Natural killer cell (primary cell): ENCODE measurements at regions of chr20 and their contacts with region 1.

Region 1: GRCh38 chr20:15288106-15288505 is 950.7 kb upstream of the FLRT3 start:
- DNase-seq: no peak
- ATAC-seq: no peak
- H3K4me3 ChIP-seq: no peak overlapping the region
- H3K4me3 Mint-ChIP-seq: no peak overlapping the region
- H3K27ac ChIP-seq: no peak overlapping the region
- H3K27ac Mint-ChIP-seq: no peak overlapping the region
- H3K4me1 ChIP-seq: no peaks in the 10 kb centered on the region
- H3K4me1 Mint-ChIP-seq: no peaks in the 10 kb centered on the region
- H3K27me3 ChIP-seq: no peaks in the 10 kb centered on the region
- H3K27me3 Mint-ChIP-seq: no peaks in the 10 kb centered on the region
- CTCF ChIP-seq: no peak

Region 2: GRCh38 chr20:15343043-15343523 is 55.0 kb after region 1 on chr20:
- intact Hi-C with region 1: loop called (anchors 10 kb)
- DNase-seq: no peak
- ATAC-seq: no peak
- H3K4me3 ChIP-seq: no peak overlapping the region
- H3K4me3 Mint-ChIP-seq: no peak overlapping the region
- H3K27ac ChIP-seq: no peak overlapping the region
- H3K27ac Mint-ChIP-seq: no peak overlapping the region
- H3K4me1 ChIP-seq: no peaks in the 10 kb centered on the region
- H3K4me1 Mint-ChIP-seq: no peaks in the 10 kb centered on the region
- H3K27me3 ChIP-seq: no peaks in the 10 kb centered on the region
- H3K27me3 Mint-ChIP-seq: no peaks in the 10 kb centered on the region
- CTCF ChIP-seq: no peak